ENCODE measurements at regions of chr1 and their contacts with region 1.

Region 1: DNA sequence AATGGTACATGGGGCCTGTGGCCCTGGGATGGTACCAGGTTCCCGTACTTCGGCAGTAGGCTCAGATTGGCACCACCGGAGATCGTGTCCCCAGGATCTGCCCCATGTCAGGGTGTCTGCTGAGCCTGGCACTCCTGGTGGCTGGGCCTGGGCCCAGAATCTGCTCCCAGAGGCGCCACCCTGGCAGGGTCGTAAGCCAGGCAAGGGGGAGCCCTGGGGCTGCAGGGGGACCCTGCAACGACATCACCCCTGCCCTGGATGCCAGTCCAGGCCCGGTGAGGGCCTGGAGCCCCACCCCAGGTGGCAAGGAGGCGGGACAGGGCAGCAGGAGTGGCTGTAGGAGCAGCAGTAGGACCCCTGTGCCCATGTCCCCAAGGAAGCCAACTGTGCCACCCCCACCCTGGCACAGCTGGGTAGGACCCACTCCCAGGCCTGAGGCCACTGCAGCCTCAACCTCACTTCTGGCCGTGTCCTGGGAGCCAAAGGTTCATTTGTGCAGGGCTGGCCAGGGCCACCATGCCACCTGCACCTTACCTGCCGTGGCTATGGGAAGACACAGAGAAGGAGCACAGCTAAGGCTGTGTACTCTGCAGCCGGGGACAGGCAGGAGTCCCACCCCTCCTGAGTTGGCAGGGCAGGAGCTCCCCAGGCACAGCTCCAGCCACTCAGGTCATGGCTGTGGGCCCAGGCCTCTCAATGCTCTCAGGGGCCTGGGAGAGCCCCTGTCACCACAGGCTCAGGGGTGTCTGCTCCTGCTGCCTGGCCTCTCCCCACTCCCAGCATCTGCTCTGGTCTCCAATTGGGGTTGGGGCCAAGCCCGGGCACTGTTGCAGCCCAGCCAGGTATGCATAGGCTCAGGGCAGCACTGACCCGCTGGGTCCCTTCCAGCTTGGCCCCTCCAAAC is 141.7 kb downstream of the EIF4G3 start:
- DNase-seq: peak; percentile 69 to 76
- ATAC-seq: peak; percentile 94 to 99 (median 97)
- H3K4me3 ChIP-seq: peak overlapping the region in 3 of 10 donors; percentile 7 to 21 (median 10)
- H3K27ac ChIP-seq: peak overlapping the region in 3 of 10 donors; percentile 8 to 34 (median 18)
- H3K4me1 ChIP-seq: peaks cover 5 to 39% (median 13%) of the 10 kb centered on the region in 9 donors
- H3K27me3 ChIP-seq: no peaks in the 10 kb centered on the region
- CTCF ChIP-seq: no peak

Region 2: GRCh38 chr1:21072721-21073120 is 37.7 kb after region 1 on chr1:
- intact Hi-C with region 1: loop called in 1 of 10 experiments (anchors 2 kb)
- DNase-seq: no peak
- ATAC-seq: peak in 1 of 8 donors; percentile 28
- H3K4me3 ChIP-seq: no peak overlapping the region
- H3K27ac ChIP-seq: no peak overlapping the region
- H3K4me1 ChIP-seq: peaks cover 0 to 50% (median 12%) of the 10 kb centered on the region in 9 donors
- H3K27me3 ChIP-seq: no peaks in the 10 kb centered on the region
- CTCF ChIP-seq: peak in 1 of 9 donors; percentile 26

Measured in heart right ventricle (tissue), 16 donors.